HEK293 (cell line): ENCODE measurements at regions of chr12 and their contacts with region 1.

Region 1: GRCh38 chr12:5022465-5023061 is 21.1 kb upstream of the KCNA5 start:
- H3K4me3 ChIP-seq: no peak overlapping the region
- H3K27ac ChIP-seq: no peak overlapping the region
- H3K4me1 ChIP-seq: no peaks in the 10 kb centered on the region
- CTCF ChIP-seq: peak; percentile 82

Region 2: DNA sequence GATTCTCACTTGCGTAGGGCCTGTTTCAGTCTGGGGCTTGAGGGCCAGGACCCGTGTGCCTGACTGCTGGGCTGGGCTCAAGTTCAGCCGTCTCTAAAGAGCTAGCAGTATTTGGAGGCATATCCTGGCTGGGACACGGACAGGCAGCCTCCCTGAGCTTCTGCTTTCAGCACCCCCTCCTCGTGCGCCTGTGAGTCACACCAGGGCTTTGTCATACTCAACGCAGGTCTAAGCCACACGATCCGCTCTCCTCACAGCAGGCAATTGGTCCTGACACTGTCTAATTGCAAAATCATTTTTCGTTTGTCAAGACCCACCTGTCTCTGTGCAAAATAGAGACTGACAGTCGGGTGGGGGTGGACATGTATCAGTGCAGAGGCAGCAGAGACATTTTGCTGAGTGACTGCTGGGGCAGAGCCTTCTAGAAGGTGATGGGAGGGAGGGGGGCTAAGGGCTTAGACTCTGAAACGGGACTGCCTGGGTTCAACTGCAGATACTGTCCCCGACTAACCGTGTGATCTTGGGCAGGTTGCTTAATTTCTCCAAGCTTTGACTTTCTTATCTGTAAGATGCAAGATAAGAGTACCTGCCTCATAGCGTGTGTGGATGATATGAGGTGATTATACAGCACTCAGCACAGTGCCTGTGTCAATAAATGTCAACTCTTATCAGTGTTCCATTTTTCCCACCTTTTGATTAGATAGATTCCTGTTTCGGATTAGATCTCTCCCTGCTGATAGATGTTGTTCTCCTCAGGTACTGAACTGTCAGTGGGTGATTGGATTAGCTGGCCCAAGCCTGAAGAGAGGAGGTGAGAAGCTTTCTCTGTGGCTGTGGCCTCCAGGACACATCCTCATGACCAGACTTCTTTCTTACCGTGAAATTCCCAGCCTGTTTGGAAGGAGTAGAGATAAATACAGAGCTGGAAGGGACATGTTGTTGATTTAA is 59.8 kb before region 1 on chr12:
- CTCF ChIA-PET with region 1: no interaction called
- POLR2A ChIA-PET with region 1: no interaction called
- H3K4me3 ChIP-seq: no peak overlapping the region
- H3K27ac ChIP-seq: no peak overlapping the region
- H3K4me1 ChIP-seq: no peaks in the 10 kb centered on the region; the same call in 1 of the 2 replicates
- CTCF ChIP-seq: no peak

Region 3: DNA sequence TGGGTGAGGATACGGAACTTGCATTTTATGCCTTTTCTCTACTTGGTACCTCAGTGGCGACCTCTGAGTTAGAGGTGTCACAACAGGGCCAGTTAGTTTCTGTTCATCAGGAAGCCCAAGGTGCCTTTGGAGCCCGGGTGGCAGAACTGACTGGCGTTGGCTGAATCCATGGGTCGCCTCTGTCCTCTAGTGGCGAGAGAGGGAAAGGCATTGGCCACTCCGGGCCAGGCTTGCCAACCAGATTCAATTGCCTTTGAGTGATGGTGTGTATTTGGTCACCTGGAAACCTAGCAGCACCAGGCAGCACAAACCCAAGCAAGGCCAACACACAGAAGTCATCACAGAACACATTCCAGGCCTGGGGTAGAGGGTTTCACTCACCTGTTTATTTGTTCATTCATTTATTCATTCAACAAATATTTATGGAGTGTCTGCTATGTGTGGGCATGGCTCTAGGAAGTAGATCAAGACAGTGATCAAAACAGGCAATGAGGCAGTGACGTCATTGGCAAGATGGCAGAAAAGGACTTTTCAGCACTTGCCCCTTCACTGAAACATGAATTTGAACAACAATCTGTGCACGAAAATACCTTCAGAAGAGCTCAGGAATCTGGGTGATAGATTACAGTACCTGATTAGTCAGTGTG is 19.4 kb before region 1 on chr12:
- CTCF ChIA-PET with region 1: interaction called, 11 read pairs
- POLR2A ChIA-PET with region 1: no interaction called
- H3K4me3 ChIP-seq: no peak overlapping the region
- H3K27ac ChIP-seq: no peak overlapping the region
- H3K4me1 ChIP-seq: no peaks in the 10 kb centered on the region
- CTCF ChIP-seq: peak; percentile 85

Region 4: DNA sequence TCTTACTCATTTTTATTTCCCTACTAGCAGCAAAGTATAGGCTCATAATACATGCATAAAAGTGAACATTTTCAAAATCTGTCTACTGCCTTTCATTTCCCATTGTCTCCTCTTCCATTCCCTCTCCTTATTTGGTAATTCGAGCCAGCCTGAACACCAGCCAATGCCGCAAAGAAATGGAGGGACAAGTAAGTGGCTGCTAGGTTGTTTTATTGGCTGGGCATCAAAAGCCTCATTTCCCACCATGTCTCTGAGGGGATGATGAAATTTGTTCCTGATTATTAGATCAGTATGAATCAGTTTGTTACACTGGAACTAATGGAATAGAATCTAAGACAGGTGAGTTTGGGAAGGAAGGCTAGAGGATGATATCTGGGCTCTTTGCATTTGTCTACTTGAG is 164.6 kb after region 1 on chr12:
- CTCF ChIA-PET with region 1: no interaction called
- POLR2A ChIA-PET with region 1: no interaction called
- H3K4me3 ChIP-seq: no peak overlapping the region
- H3K27ac ChIP-seq: no peak overlapping the region
- H3K4me1 ChIP-seq: no peaks in the 10 kb centered on the region
- CTCF ChIP-seq: no peak